ENCODE measurements at regions of chr11 and their contacts with region 1.

Region 1: DNA sequence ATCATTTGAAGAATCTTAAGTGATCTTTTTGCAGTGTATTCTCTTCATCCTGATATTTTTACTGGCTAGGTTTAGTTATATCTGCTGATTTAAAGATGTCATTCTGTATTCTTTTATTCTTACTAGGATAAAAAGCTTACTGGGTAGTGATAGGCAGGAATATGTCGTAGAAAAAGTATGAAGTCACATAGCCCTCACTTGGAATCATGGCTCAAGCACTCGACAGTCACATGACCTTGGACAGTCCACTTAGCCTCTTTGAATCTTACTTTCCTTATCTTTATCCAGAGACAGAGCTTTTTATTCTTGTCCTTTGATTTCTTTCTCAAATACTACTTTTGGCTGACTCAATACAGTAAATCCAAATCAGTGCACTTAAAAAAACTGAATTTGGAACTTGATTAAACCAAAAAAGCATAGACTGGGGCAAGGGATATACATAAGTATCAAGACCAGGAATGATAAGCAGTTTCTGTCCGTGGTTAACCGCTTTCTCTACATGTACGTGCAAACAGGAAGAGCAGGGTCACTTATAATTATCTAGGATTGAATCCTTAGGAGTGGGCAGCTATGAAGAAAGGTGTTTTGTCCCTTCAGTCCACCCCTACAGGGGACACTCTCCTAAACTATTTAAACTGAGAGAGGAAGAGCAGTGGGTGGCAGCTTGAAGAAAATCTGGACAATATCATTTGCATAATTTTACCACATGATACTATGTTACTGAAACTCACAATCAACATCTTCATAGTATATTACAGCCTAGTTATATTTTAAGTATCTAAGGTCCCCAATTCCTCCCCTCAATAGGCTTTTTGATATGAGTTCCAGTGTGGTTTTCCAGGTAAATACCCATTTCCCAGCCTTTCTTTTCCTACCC is 8.0 kb downstream of the MMP7 start:
- DNase-seq: no peak
- ATAC-seq: peak; percentile 81
- H3K4me3 ChIP-seq: no peak overlapping the region
- H3K27ac ChIP-seq: no peak overlapping the region
- H3K4me1 ChIP-seq: peaks cover 15% of the 10 kb centered on the region
- H3K27me3 ChIP-seq: no peaks in the 10 kb centered on the region
- CTCF ChIP-seq: no peak
- EP300 ChIP-seq: no peak
- POLR2A ChIP-seq: no peak
- RAD21 ChIP-seq: no peak

Region 2: DNA sequence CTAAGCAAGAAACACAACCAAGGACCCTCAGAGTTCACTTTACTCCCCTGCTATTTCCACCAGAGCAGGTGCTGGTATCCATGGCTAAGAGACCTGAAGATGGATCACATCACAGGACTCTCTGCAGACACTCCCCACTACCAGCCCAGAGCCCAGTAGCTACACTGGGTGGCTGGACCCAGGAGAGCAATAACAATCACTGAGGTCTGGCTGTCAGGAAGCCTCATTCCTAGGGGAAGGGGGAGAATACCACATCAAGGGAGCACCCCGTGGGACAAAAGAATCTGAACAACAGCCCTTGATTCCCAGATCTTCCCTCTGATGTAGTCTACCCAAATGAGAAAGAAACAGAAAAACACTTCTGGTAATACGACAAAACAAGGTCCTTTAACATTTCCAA is 17.0 kb after region 1 on chr11:
- CTCF ChIA-PET with region 1: interaction called, 31 read pairs
- POLR2A ChIA-PET with region 1: interaction called, 8 read pairs
- RAD21 ChIA-PET with region 1: interaction called, 9 read pairs
- SMC1A ChIA-PET with region 1: interaction called, 18 read pairs
- in situ Hi-C with region 1: no loop called
- intact Hi-C with region 1: no loop called
- DNase-seq: no peak
- ATAC-seq: no peak
- H3K4me3 ChIP-seq: no peak overlapping the region
- H3K27ac ChIP-seq: no peak overlapping the region
- H3K4me1 ChIP-seq: no peaks in the 10 kb centered on the region
- H3K27me3 ChIP-seq: no peaks in the 10 kb centered on the region
- CTCF ChIP-seq: no peak
- EP300 ChIP-seq: no peak
- POLR2A ChIP-seq: no peak
- RAD21 ChIP-seq: no peak

Region 3: DNA sequence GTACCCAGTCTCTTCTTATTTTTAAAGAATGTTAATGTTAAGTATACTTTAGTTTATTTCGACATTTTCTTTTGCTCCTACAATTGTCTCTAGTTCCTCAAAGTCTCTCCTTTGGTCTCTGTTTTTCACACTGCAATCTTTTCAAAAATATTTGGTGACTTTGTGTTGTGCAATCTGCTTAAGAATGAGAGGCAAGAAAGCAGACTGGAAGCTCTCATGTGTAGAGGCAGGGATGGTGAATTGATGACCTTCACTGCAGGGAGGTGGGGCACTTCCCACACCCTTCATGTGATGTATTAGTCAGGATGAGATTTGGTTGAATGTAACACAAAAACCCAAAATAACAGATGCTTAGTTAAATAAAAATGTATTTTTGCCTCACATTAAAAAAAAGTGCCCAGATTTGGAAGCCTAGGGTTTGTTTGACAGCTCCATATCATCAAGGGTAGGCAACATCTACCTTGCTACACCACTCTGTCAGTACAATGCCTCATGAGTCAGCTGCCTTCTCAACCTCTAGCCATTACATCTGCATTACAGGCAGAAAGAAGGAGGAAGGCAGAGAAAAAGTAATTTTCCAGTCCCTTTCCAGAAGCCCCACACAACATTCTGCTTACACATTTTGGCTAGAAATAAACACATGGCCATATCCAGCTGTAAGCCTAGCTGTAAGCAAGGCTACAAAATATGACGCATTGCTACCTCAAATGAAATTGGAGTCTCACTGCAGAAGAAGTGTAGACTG is 186.8 kb after region 1 on chr11:
- CTCF ChIA-PET with region 1: no interaction called
- POLR2A ChIA-PET with region 1: no interaction called
- RAD21 ChIA-PET with region 1: no interaction called
- SMC1A ChIA-PET with region 1: no interaction called
- in situ Hi-C with region 1: no loop called
- intact Hi-C with region 1: no loop called
- DNase-seq: no peak
- ATAC-seq: no peak
- H3K4me3 ChIP-seq: no peak overlapping the region
- H3K27ac ChIP-seq: no peak overlapping the region
- H3K4me1 ChIP-seq: no peaks in the 10 kb centered on the region
- H3K27me3 ChIP-seq: peaks cover 0 to 2% of the 10 kb centered on the region in 2 experiments; a peak in 2 of 4 replicates
- CTCF ChIP-seq: no peak
- EP300 ChIP-seq: no peak
- POLR2A ChIP-seq: no peak
- RAD21 ChIP-seq: no peak

Region 4: DNA sequence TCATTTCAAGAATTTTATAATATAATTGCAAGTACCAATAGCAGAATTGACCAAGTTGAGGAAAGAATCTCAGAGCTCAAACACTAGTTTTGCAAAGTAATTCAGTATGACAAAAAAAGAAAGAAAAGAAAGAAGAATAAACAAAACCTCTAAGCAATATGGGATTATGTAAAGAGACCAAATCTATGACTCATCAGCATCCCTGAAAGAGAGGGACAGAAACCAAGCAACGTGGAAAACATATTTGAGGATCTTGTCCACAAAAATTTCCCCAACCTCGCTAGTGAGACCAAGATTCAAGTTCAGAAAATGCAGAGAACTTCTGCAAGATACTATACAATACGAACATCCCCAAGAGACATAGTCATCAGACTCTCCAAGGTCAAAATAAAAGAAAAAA is 1310.2 kb after region 1 on chr11:
- CTCF ChIA-PET with region 1: no interaction called
- POLR2A ChIA-PET with region 1: no interaction called
- RAD21 ChIA-PET with region 1: no interaction called
- SMC1A ChIA-PET with region 1: no interaction called
- in situ Hi-C with region 1: no loop called
- intact Hi-C with region 1: no loop called
- DNase-seq: no peak
- ATAC-seq: no peak
- H3K4me3 ChIP-seq: no peak overlapping the region
- H3K27ac ChIP-seq: no peak overlapping the region
- H3K4me1 ChIP-seq: no peaks in the 10 kb centered on the region
- H3K27me3 ChIP-seq: no peaks in the 10 kb centered on the region
- CTCF ChIP-seq: no peak
- EP300 ChIP-seq: no peak
- POLR2A ChIP-seq: no peak
- RAD21 ChIP-seq: no peak